H1 (cell line): ENCODE measurements at regions of chr17 and their contacts with region 1.

Region 1: GRCh38 chr17:76397687-76398487 is 13.5 kb downstream of the SPHK1 start:
- DNase-seq: peak; percentile 81 to 98
- H3K4me3 ChIP-seq: no peak overlapping the region
- H3K27ac ChIP-seq: 0 out of 2 replicates have a peak overlapping the region, but pooled peaks have one; percentile 17
- H3K4me1 ChIP-seq: no peaks in the 10 kb centered on the region
- H3K27me3 ChIP-seq: no peaks in the 10 kb centered on the region
- CTCF ChIP-seq: peak; percentile 94 to 100 (median 94)
- EP300 ChIP-seq: no peak
- POLR2A ChIP-seq: no peak
- RAD21 ChIP-seq: peak; percentile 88 to 90

Region 2: DNA sequence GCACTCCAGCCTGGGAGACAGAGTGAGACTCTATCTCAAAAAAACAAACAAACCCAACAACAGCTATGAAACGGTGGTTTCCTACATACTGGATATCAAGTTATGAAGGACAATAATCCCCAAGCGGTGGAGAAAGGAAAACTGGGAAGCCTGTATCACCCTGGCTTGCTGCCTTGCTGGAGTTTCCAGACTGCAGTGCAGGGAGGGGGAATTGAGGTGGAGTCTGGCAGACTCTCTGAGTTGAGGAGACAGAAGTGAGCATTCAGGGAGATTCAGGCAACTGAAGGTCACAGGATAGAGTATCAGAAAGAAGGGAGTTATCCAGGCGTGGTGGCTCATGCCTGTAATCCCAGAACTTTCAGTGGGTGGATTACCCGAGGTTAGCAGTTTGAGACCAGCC is 101.7 kb before region 1 on chr17:
- CTCF ChIA-PET with region 1: interaction called, 161 read pairs
- POLR2A ChIA-PET with region 1: no interaction called
- DNase-seq: no peak
- H3K4me3 ChIP-seq: no peak overlapping the region
- H3K27ac ChIP-seq: no peak overlapping the region
- H3K4me1 ChIP-seq: no peaks in the 10 kb centered on the region
- H3K27me3 ChIP-seq: no peaks in the 10 kb centered on the region
- CTCF ChIP-seq: no peak
- EP300 ChIP-seq: no peak
- POLR2A ChIP-seq: no peak
- RAD21 ChIP-seq: no peak

Region 3: GRCh38 chr17:76331083-76331482 is 66.8 kb before region 1 on chr17:
- CTCF ChIA-PET with region 1: interaction called, 32 read pairs
- POLR2A ChIA-PET with region 1: no interaction called
- DNase-seq: no peak
- H3K4me3 ChIP-seq: no peak overlapping the region
- H3K27ac ChIP-seq: no peak overlapping the region
- H3K4me1 ChIP-seq: no peaks in the 10 kb centered on the region
- H3K27me3 ChIP-seq: no peaks in the 10 kb centered on the region
- CTCF ChIP-seq: no peak
- EP300 ChIP-seq: no peak
- POLR2A ChIP-seq: no peak
- RAD21 ChIP-seq: no peak

Region 4: GRCh38 chr17:76384222-76384986 is 13.5 kb before region 1 on chr17 and contains the start of gene SPHK1:
- CTCF ChIA-PET with region 1: interaction called, 150 read pairs
- POLR2A ChIA-PET with region 1: no interaction called
- DNase-seq: peak in 1 of 2 experiments; percentile 83
- H3K4me3 ChIP-seq: peak within 1 kb of the TSS; percentile 39 to 80 (median 60)
- H3K27ac ChIP-seq: no peak within 1 kb of the TSS
- H3K4me1 ChIP-seq: peaks cover 5 to 46% (median 22%) of the 10 kb centered on the region in 4 experiments
- H3K27me3 ChIP-seq: peaks cover 18 to 47% (median 33%) of the 10 kb centered on the region in 4 experiments; a peak in 6 of 7 replicates
- CTCF ChIP-seq: no peak
- EP300 ChIP-seq: no peak
- POLR2A ChIP-seq: no peak
- RAD21 ChIP-seq: no peak
- total RNA-seq, gene SPHK1: 2.4 and 2.6 TPM in 2 replicates

Region 5: GRCh38 chr17:76434870-76435269 is 37.0 kb after region 1 on chr17:
- CTCF ChIA-PET with region 1: interaction called, 11 read pairs
- POLR2A ChIA-PET with region 1: no interaction called
- DNase-seq: no peak
- H3K4me3 ChIP-seq: no peak overlapping the region
- H3K27ac ChIP-seq: no peak overlapping the region
- H3K4me1 ChIP-seq: peaks cover 0 to 19% (median 15%) of the 10 kb centered on the region in 4 experiments
- H3K27me3 ChIP-seq: no peaks in the 10 kb centered on the region
- CTCF ChIP-seq: no peak
- EP300 ChIP-seq: no peak
- POLR2A ChIP-seq: no peak
- RAD21 ChIP-seq: no peak

Region 6: GRCh38 chr17:76501018-76501826 is 103.3 kb after region 1 on chr17 and contains the start of gene RHBDF2:
- CTCF ChIA-PET with region 1: interaction called, 32 read pairs
- POLR2A ChIA-PET with region 1: interaction called, 3 read pairs
- DNase-seq: peak; percentile 65 to 100
- H3K4me3 ChIP-seq: peak within 1 kb of the TSS; percentile 62 to 82 (median 76)
- H3K27ac ChIP-seq: no peak within 1 kb of the TSS
- H3K4me1 ChIP-seq: peaks cover 11 to 43% (median 34%) of the 10 kb centered on the region in 4 experiments
- H3K27me3 ChIP-seq: no peaks in the 10 kb centered on the region
- CTCF ChIP-seq: no peak
- EP300 ChIP-seq: no peak
- POLR2A ChIP-seq: peak in 1 of 2 experiments; percentile 71; a peak in 2 of 3 replicates
- RAD21 ChIP-seq: no peak
- total RNA-seq, gene RHBDF2: 25.9 and 26.2 TPM in 2 replicates